ENCODE measurements at regions of chr5 and their contacts with region 1.

Region 1: GRCh38 chr5:114118511-114118910 is 243.4 kb upstream of the KCNN2 start:
- DNase-seq: no peak
- H3K4me3 Mint-ChIP-seq: no peak overlapping the region
- H3K27ac Mint-ChIP-seq: no peak overlapping the region
- H3K4me1 Mint-ChIP-seq: no peaks in the 10 kb centered on the region
- H3K27me3 Mint-ChIP-seq: no peaks in the 10 kb centered on the region
- CTCF ChIP-seq: no peak

Region 2: GRCh38 chr5:113922343-113922742 is 196.2 kb before region 1 on chr5:
- CTCF ChIA-PET with region 1: no interaction called
- intact Hi-C with region 1: no loop called
- DNase-seq: no peak
- H3K4me3 Mint-ChIP-seq: no peak overlapping the region
- H3K27ac Mint-ChIP-seq: no peak overlapping the region
- H3K4me1 Mint-ChIP-seq: no peaks in the 10 kb centered on the region
- H3K27me3 Mint-ChIP-seq: no peaks in the 10 kb centered on the region
- CTCF ChIP-seq: no peak

Region 3: DNA sequence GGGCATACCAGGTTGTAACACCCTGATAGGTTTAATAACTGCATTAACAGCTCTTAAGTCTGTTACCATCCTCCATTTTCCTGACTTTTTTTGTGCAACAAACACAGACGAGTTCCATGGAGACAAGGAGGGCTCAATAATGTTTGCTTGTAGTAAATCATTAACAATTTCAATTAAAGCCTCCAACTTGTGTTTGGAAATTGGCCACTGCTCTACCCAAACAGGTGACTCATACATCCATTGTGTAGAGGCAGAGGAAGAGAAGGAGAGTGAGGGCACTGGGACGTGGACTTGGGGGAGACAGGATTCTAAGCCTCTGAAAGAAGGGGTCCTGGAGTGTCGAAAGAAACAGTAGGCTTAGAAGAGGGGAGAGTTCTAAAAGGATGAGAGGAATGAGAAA is 29.7 kb after region 1 on chr5:
- CTCF ChIA-PET with region 1: no interaction called
- intact Hi-C with region 1: loop called (anchors 1 kb)
- DNase-seq: peak; percentile 60
- H3K4me3 Mint-ChIP-seq: peak overlapping the region; percentile 55
- H3K27ac Mint-ChIP-seq: peak overlapping the region; percentile 94
- H3K4me1 Mint-ChIP-seq: peaks cover 37% of the 10 kb centered on the region
- H3K27me3 Mint-ChIP-seq: no peaks in the 10 kb centered on the region
- CTCF ChIP-seq: no peak

Region 4: DNA sequence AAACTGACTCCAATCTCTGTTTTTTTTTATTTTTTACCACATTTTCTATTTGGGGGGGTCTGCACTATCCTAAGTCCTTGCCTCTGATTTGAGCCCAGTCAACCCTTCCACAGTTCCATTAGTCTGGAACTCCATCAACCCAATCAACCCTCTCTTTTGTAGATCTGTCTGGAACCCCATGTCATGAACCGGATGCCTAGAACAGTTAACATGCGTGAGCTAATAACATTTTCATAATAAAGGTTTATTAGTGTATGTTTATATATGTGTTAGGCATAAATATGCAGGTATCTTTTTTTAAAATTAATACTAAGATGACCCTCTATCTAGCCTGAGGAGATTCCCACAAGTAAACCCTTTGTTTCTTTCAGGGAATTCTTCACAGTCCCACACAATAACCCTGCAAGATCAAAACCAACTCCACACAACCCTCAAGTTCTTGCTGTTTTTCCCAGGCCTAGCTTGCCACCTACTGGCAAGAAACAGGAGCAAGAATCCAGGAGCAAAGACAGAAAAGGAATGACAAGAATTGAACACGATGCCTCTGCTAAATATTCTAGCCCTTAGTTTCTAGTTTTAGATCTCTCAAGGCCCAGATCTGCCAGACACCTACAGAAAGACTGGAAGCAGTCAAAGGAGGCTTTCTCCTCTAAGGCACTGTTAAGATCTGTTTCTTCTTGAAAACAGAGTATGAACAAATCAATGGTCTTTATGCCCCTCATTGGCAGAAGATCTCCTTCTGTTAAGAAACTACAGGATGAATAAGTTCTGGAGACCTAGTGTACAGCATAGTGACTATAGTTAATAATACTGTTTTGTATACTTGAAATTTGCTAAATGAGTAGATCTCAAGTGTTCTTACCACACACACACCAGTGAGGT is 950.8 kb after region 1 on chr5:
- CTCF ChIA-PET with region 1: no interaction called
- intact Hi-C with region 1: no loop called
- DNase-seq: peak; percentile 51
- H3K4me3 Mint-ChIP-seq: no peak overlapping the region
- H3K27ac Mint-ChIP-seq: no peak overlapping the region
- H3K4me1 Mint-ChIP-seq: peaks cover 7% of the 10 kb centered on the region
- H3K27me3 Mint-ChIP-seq: no peaks in the 10 kb centered on the region
- CTCF ChIP-seq: no peak